Gastrocnemius medialis (tissue), 4 donors: ENCODE measurements at regions of chr4 and their contacts with region 1.

Region 1: GRCh38 chr4:81471588-81472288 is at the start of gene RASGEF1B:
- DNase-seq: peak; percentile 71 to 77
- ATAC-seq: peak; percentile 81 to 82
- H3K4me3 ChIP-seq: peak within 1 kb of the TSS; percentile 85 to 99 (median 88)
- H3K27ac ChIP-seq: peak within 1 kb of the TSS; percentile 87 to 90 (median 88)
- H3K4me1 ChIP-seq: peaks cover 0 to 13% of the 10 kb centered on the region in 2 donors
- H3K27me3 ChIP-seq: no peaks in the 10 kb centered on the region
- CTCF ChIP-seq: peak in 1 of 5 experiments; percentile 14
- POLR2A ChIP-seq: peak; percentile 67 to 89
- total RNA-seq, gene RASGEF1B: 1.9 to 6.0 (median 5.2) TPM

Region 2: GRCh38 chr4:81666491-81666890 is 194.8 kb after region 1 on chr4:
- in situ Hi-C with region 1: no loop called
- intact Hi-C with region 1: no loop called
- DNase-seq: no peak
- ATAC-seq: no peak
- H3K4me3 ChIP-seq: no peak overlapping the region
- H3K27ac ChIP-seq: no peak overlapping the region
- H3K4me1 ChIP-seq: peaks cover 0 to 4% of the 10 kb centered on the region in 2 donors
- H3K27me3 ChIP-seq: no peaks in the 10 kb centered on the region
- CTCF ChIP-seq: no peak
- POLR2A ChIP-seq: no peak

Region 3: DNA sequence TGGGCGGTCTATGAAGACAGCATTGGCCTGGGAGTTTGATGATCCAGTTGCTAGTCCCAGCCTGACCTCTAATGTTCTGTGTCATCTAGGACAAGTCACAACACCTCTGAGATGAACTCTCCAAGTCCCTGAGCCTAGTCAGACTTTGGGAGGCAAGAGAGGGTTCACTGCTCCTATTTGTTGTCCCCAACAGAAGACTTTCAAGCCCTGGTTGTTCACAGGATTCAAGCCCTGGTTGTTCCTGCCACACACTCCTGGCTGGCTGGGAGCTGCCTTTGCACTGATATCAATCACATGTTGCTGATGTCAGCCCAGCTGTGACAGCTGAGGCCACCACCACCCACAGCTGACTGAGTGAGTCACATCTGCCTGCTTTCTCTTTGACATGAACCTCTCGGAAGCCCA is 253.2 kb after region 1 on chr4:
- in situ Hi-C with region 1: no loop called
- intact Hi-C with region 1: loop called (anchors 5 kb)
- DNase-seq: peak; percentile 40 to 57
- ATAC-seq: peak; percentile 72 to 82
- H3K4me3 ChIP-seq: no peak overlapping the region
- H3K27ac ChIP-seq: peak overlapping the region in 2 of 4 donors; percentile 18 to 53
- H3K4me1 ChIP-seq: peaks cover 0 to 13% of the 10 kb centered on the region in 2 donors
- H3K27me3 ChIP-seq: no peaks in the 10 kb centered on the region
- CTCF ChIP-seq: no peak
- POLR2A ChIP-seq: no peak

Region 4: GRCh38 chr4:81844717-81845116 is 373.0 kb after region 1 on chr4:
- in situ Hi-C with region 1: loop called (anchors 5 to 10 kb)
- intact Hi-C with region 1: loop called (anchors 1 kb)
- DNase-seq: peak; percentile 17 to 64
- ATAC-seq: peak; percentile 89 to 95
- H3K4me3 ChIP-seq: no peak overlapping the region
- H3K27ac ChIP-seq: no peak overlapping the region
- H3K4me1 ChIP-seq: peaks cover 0 to 3% of the 10 kb centered on the region in 2 donors
- H3K27me3 ChIP-seq: no peaks in the 10 kb centered on the region
- CTCF ChIP-seq: peak; percentile 57 to 74 (median 68)
- POLR2A ChIP-seq: no peak

Region 5: GRCh38 chr4:82284858-82285805 is 813.4 kb after region 1 on chr4:
- in situ Hi-C with region 1: loop called in 1 of 4 experiments (anchors 25 kb)
- intact Hi-C with region 1: loop called (anchors 5 kb)
- DNase-seq: peak; percentile 96 to 99
- ATAC-seq: peak; percentile 100
- H3K4me3 ChIP-seq: peak overlapping the region; percentile 58 to 68 (median 62)
- H3K27ac ChIP-seq: peak overlapping the region; percentile 67 to 81 (median 74)
- H3K4me1 ChIP-seq: peaks cover 0 to 3% of the 10 kb centered on the region in 2 donors
- H3K27me3 ChIP-seq: no peaks in the 10 kb centered on the region
- CTCF ChIP-seq: peak; percentile 71 to 97 (median 77)
- POLR2A ChIP-seq: no peak

Region 6: DNA sequence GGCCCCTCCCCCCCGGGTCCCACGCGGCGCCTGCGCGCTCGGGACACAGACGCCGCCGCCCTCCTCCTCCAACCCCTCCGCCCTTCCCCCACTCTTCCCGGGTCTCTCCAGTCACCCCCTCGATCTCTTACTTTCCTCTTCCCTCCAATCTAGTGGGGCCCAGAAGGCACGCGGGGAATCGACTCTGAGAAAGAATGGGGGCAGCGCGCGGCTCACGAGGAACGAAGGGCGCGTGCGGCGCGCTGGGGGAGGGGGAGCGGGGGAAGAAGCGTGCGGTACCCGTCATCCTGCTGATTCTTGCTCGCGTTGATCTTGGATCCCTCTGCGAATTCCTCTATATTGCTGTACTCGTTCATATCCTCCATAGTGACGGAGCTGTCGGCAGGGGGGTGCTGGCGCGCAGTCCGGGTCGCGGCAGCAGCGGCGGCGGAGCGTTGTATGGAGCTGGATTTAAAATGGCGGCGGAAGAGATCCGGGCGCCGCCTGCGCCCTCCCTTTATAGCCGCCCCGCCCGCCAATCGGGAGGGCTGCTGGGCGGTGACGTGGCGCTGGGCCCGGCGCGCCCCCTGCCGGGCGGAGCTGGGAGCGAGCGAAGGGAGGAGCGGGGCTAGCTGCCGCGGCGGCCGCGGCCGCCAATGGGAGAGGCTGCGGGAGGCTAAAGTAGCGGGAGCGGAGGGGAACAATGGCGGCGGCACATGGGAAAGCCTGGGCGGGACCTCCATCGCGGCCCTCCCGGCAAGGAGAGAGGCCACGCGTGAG is 957.4 kb after region 1 on chr4:
- in situ Hi-C with region 1: no loop called
- intact Hi-C with region 1: loop called (anchors 5 kb)
- DNase-seq: peak; percentile 84 to 91
- ATAC-seq: peak; percentile 74 to 76
- H3K4me3 ChIP-seq: peak overlapping the region; percentile 81 to 99 (median 96)
- H3K27ac ChIP-seq: peak overlapping the region; percentile 94 to 100 (median 98)
- H3K4me1 ChIP-seq: peaks cover 32 to 38% of the 10 kb centered on the region in 2 donors
- H3K27me3 ChIP-seq: no peaks in the 10 kb centered on the region
- CTCF ChIP-seq: peak; percentile 82 to 99 (median 98)
- POLR2A ChIP-seq: peak; percentile 90 to 94